Caco-2 (cell line): ENCODE measurements at regions of chr3 and their contacts with region 1.

Region 1: GRCh38 chr3:93979833-93980676 is at the start of gene ARL13B:
- DNase-seq: peak; percentile 96 to 97
- H3K4me3 ChIP-seq: peak within 1 kb of the TSS; percentile 68
- H3K4me3 Mint-ChIP-seq: peak within 1 kb of the TSS; percentile 77
- H3K27ac Mint-ChIP-seq: peak within 1 kb of the TSS; percentile 17
- H3K4me1 ChIP-seq: no peaks in the 10 kb centered on the region
- H3K4me1 Mint-ChIP-seq: peaks cover 6% of the 10 kb centered on the region
- H3K27me3 ChIP-seq: no peaks in the 10 kb centered on the region
- H3K27me3 Mint-ChIP-seq: no peaks in the 10 kb centered on the region
- CTCF ChIP-seq: no peak
- total RNA-seq, gene ARL13B: 7.6 and 7.7 TPM in 2 replicates

Region 2: DNA sequence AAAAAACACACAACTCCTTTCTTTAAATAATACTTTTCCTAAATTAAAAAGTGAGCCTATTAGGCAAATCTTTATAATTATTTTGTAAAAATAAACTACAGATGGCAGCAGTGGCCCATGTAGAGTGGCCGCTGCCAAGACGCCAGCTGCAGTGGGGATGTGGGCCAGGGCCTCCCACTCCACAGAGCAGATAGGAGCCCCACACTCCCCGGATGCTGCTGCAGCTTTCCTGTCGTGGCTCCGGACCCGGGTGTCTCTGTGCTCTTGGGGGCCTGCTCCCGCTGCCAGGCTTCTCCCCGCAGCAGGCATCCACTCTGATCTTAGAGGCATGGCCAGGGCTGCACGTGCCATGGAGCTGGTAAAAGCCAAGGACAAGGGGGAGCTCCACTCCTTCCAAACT is 73.8 kb before region 1 on chr3:
- CTCF ChIA-PET with region 1: no interaction called
- POLR2A ChIA-PET with region 1: no interaction called
- intact Hi-C with region 1: loop called (anchors 10 kb)
- DNase-seq: no peak
- H3K4me3 ChIP-seq: no peak overlapping the region
- H3K4me3 Mint-ChIP-seq: no peak overlapping the region
- H3K27ac Mint-ChIP-seq: no peak overlapping the region
- H3K4me1 ChIP-seq: no peaks in the 10 kb centered on the region
- H3K4me1 Mint-ChIP-seq: no peaks in the 10 kb centered on the region
- H3K27me3 ChIP-seq: no peaks in the 10 kb centered on the region
- H3K27me3 Mint-ChIP-seq: no peaks in the 10 kb centered on the region
- CTCF ChIP-seq: no peak

Region 3: GRCh38 chr3:94101851-94102250 is 121.8 kb after region 1 on chr3:
- CTCF ChIA-PET with region 1: no interaction called
- POLR2A ChIA-PET with region 1: no interaction called
- intact Hi-C with region 1: no loop called
- DNase-seq: no peak
- H3K4me3 ChIP-seq: no peak overlapping the region
- H3K4me3 Mint-ChIP-seq: no peak overlapping the region
- H3K27ac Mint-ChIP-seq: no peak overlapping the region
- H3K4me1 ChIP-seq: no peaks in the 10 kb centered on the region
- H3K4me1 Mint-ChIP-seq: no peaks in the 10 kb centered on the region
- H3K27me3 ChIP-seq: no peaks in the 10 kb centered on the region
- H3K27me3 Mint-ChIP-seq: no peaks in the 10 kb centered on the region
- CTCF ChIP-seq: no peak